Activated CD4-positive, alpha-beta T cell treated with anti-CD3 and anti-CD28 coated beads, Interleukin-2, amount 10 ng/mL, durations not matched to agents 24 days and 14 days (primary cell): ENCODE measurements at regions of chr1 and their contacts with region 1.

Region 1: GRCh38 chr1:212665241-212666115 is 34.2 kb downstream of the BATF3 start:
- DNase-seq: peak; percentile 94
- H3K4me3 Mint-ChIP-seq: peak overlapping the region; percentile 76
- H3K27ac Mint-ChIP-seq: peak overlapping the region; percentile 66
- H3K4me1 Mint-ChIP-seq: peaks cover 27% of the 10 kb centered on the region
- H3K27me3 Mint-ChIP-seq: peaks cover 24% of the 10 kb centered on the region

Region 2: DNA sequence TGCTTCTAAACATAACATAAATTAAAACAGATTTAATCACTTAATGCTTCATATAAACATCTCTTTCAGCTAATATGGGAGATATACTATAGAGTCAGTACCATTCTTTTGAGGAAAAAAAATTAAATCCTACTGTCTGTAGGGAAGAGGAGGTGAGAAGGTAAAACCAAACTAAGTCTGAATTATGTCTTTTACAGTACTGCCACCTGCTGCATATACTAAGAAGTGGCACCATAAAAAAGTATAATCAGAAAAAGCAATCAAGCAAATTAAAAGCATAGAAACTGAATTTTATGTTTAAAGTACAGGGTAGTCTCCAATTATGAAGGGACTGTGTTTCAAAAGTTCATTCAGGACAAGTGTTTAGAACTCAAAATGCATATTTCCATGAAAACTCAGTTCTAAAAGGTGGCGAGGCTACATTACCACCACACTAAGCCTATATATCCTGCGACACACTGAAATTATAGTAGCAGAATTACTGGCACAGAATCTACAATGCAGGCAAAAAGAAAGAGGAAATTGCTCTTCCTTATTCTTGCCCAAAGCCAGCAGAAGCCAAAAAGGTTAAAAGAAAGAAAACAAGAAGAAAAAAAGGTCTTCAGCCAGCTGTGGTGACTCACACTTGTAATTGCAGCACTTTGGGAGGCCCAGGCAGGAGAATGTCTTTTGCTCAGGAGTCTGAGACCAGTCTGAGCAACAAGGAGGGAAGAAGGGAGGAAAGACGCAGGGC is 117.1 kb after region 1 on chr1:
- intact Hi-C with region 1: loop called (anchors 1 kb)
- DNase-seq: no peak
- H3K4me3 Mint-ChIP-seq: no peak overlapping the region
- H3K27ac Mint-ChIP-seq: no peak overlapping the region
- H3K4me1 Mint-ChIP-seq: peaks cover 8% of the 10 kb centered on the region
- H3K27me3 Mint-ChIP-seq: no peaks in the 10 kb centered on the region